Gastrocnemius medialis (tissue), 4 donors: ENCODE measurements at regions of chr15 and their contacts with region 1.

Region 1: DNA sequence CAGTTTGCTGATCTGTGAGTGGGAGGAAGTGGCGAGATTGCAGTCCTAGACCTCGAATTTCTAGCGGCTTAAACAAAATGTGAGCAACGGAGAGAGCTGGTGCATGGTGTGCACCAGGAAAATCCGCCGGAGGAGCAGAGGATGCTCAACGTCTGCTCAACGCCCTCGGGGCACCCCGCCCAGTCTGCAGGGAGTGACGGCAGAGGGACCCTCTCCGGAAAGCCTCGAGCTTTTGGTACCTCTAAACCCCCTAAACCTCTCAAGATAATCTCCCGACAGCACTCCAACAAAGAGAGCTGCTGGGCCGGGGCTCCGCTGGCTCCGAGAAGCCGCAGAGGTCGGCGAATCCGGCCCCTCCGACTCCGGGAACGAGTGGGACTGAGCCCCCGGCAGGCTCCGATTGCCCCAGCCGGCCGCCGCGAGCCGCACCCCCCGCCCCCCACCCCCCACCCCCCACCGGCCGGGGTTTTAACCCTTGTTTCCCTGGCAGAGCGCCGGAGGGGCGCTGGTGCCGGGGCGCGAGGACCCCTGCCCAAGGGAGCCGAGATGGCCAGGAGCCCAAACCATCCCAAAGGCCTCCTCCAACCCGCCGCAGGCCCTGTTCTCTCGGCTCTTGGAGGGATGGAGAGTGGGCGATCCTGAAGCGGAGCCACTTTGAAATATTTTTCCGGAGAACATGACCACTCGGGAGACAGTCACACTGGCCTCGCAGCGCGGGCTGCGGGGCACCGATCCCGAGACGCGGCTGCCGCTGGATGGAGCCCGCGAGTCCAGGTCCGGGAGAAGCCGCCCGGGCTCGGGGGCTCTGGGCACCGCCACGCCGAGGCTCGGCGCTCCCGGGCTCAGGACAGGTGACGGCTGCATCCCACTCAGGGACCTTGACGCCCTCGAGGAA is 1.5 kb downstream of the MEGF11 start:
- DNase-seq: no peak
- ATAC-seq: peak; percentile 67 to 77
- H3K4me3 ChIP-seq: peak overlapping the region; percentile 56 to 83 (median 62)
- H3K27ac ChIP-seq: no peak overlapping the region
- H3K4me1 ChIP-seq: peaks cover 9 to 27% of the 10 kb centered on the region in 2 donors
- H3K27me3 ChIP-seq: peaks cover 45 to 63% (median 57%) of the 10 kb centered on the region in 3 donors
- CTCF ChIP-seq: peak; percentile 31 to 66 (median 48)
- POLR2A ChIP-seq: no peak

Region 2: DNA sequence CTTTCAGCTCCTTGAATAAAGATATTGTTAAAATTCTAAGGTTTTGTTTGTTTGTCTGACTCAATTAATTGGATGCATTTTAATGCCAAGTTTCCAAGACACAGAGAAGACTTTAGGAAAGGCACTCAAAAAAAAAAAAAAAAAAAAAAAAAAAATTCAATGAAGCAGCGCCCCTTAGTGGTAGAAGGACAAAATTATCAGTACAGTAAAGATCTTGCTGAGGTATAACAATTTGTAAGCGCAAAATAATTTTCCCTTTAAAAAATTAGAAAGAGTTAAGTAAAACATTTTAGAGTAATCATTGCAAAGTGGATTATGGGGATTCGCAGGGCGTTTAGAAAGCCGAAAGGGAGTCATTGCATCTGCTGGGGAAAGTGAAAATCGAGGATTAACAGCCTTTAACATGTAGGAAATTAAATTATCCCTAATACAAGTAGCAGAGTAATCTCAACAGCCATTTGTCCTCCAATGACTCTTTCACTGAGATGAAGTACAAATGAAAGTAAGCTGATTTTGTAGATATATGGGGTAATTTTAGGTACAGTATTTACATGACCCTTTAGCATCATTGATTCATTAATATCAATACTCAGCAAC is 35.5 kb after region 1 on chr15:
- in situ Hi-C with region 1: no loop called
- intact Hi-C with region 1: loop called (anchors 2 kb)
- DNase-seq: no peak
- ATAC-seq: no peak
- H3K4me3 ChIP-seq: no peak overlapping the region
- H3K27ac ChIP-seq: no peak overlapping the region
- H3K4me1 ChIP-seq: peaks cover 5 to 9% of the 10 kb centered on the region in 2 donors
- H3K27me3 ChIP-seq: no peaks in the 10 kb centered on the region
- CTCF ChIP-seq: peak in 4 of 5 experiments; percentile 16 to 61 (median 38)
- POLR2A ChIP-seq: no peak